Posterior cingulate gyrus (tissue), 11 donors: ENCODE measurements at regions of chr11 and their contacts with region 1.

Region 1: DNA sequence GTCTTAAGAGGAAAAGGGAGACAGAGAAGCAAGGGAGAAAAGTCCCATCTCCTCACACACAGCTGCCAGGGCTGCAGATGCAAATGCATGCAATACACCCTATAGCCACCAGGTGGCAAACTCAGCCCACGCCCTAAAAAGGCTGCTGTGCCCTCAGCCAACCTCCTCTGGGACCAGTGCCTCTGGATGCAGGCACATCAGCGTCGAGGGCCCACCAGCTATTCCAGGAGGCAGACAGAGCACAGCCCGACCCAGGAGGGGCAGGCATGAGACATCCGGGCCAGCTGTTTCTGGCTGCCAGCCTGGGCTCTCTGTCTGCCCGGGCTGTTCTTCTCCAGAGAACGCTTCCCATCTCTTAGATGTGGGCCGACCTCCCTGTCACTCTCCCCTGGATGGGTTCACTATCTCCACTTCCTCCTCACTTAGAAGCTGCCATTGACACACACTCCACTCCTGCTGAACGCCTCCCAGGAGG is 39.7 kb downstream of the TPBGL start:
- DNase-seq: peak; percentile 68 to 97 (median 86)

Region 2: GRCh38 chr11:75328426-75329277 is 48.4 kb after region 1 on chr11:
- intact Hi-C with region 1: loop called (anchors 1 kb)
- DNase-seq: peak in 9 of 10 donors; percentile 62 to 96 (median 76)

Region 3: GRCh38 chr11:75450826-75451821 is 170.9 kb after region 1 on chr11:
- intact Hi-C with region 1: no loop called
- DNase-seq: no peak

Region 4: GRCh38 chr11:75532200-75533048 is 252.2 kb after region 1 on chr11:
- intact Hi-C with region 1: loop called (anchors 5 kb)
- DNase-seq: peak in 9 of 10 donors; percentile 47 to 95 (median 76)